ENCODE measurements at regions of chr11 and their contacts with region 1.

Region 1: GRCh38 chr11:111446404-111447111 is 65.6 kb downstream of the BTG4 start:
- DNase-seq: peak; percentile 91
- ATAC-seq: peak; percentile 99
- H3K4me3 Mint-ChIP-seq: no peak overlapping the region
- H3K27ac Mint-ChIP-seq: peak overlapping the region; percentile 36
- H3K4me1 Mint-ChIP-seq: peaks cover 17% of the 10 kb centered on the region
- H3K27me3 Mint-ChIP-seq: peaks cover 6% of the 10 kb centered on the region

Region 2: DNA sequence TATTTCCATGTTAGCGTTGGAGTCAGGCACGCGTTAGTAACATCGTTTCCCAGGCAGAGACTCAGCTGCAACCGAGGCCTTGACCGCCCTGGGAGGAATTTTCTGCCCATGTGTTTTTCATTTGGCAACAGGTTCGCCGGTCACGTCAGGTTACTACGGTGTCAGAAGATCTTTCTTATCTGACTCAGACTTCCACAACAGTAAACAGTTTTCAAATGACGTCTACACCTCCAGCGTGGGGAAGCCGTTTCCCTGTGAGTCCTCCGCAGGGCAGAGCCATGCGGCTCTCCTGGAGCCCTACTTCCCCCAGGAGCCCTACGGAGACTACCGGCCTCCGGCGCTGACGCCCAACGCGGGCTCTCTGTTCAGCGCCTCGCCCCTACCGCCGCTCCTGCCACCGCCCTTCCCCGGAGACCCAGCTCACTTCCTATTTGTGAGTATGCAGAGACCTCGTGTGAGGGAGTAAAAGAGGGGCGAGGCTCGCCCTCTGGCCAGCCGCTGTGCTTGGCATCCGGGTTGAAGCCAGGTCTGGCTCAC is 162.5 kb before region 1 on chr11:
- CTCF ChIA-PET with region 1: interaction called, 52 read pairs
- DNase-seq: no peak
- ATAC-seq: no peak
- H3K4me3 Mint-ChIP-seq: no peak overlapping the region
- H3K27ac Mint-ChIP-seq: no peak overlapping the region
- H3K4me1 Mint-ChIP-seq: no peaks in the 10 kb centered on the region
- H3K27me3 Mint-ChIP-seq: peaks cover 13% of the 10 kb centered on the region

Region 3: GRCh38 chr11:111422494-111423249 is 23.9 kb before region 1 on chr11:
- CTCF ChIA-PET with region 1: interaction called, 27 read pairs
- DNase-seq: peak; percentile 51
- ATAC-seq: peak; percentile 57
- H3K4me3 Mint-ChIP-seq: no peak overlapping the region
- H3K27ac Mint-ChIP-seq: no peak overlapping the region
- H3K4me1 Mint-ChIP-seq: peaks cover 15% of the 10 kb centered on the region
- H3K27me3 Mint-ChIP-seq: peaks cover 4% of the 10 kb centered on the region

Region 4: GRCh38 chr11:111429066-111429506 is 17.5 kb before region 1 on chr11:
- CTCF ChIA-PET with region 1: interaction called, 27 read pairs
- DNase-seq: peak; percentile 72
- ATAC-seq: peak; percentile 55
- H3K4me3 Mint-ChIP-seq: no peak overlapping the region
- H3K27ac Mint-ChIP-seq: no peak overlapping the region
- H3K4me1 Mint-ChIP-seq: peaks cover 2% of the 10 kb centered on the region
- H3K27me3 Mint-ChIP-seq: peaks cover 21% of the 10 kb centered on the region

Measured in activated CD8-positive, alpha-beta memory T cell treated with anti-CD3 and anti-CD28 coated beads, Interleukin-2, amount 10 ng/mL, durations not matched to agents 7 days and 5 days (primary cell).